Panc1 (cell line): ENCODE measurements at regions of chr7 and their contacts with region 1.

Region 1: DNA sequence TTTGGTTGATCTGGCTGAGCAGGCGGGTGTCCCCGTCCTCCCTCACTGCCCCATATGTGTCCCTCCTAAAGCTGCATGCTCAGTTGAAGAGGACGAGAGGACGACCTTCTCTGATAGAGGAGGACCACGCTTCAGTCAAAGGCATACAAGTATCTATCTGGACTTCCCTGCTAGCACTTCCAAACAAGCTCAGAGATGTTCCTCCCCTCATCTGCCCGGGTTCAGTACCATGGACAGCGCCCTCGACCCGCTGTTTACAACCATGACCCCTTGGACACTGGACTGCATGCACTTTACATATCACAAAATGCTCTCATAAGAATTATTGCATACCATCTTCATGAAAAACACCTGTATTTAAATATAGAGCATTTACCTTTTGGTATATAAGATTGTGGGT is 26.9 kb upstream of the TRIM56 start:
- DNase-seq: no peak
- ATAC-seq: no peak
- H3K4me3 ChIP-seq: no peak overlapping the region
- H3K27ac ChIP-seq: no peak overlapping the region
- H3K4me1 ChIP-seq: no peaks in the 10 kb centered on the region
- H3K27me3 ChIP-seq: peaks cover 17% of the 10 kb centered on the region
- CTCF ChIP-seq: no peak

Region 2: GRCh38 chr7:100896732-100897608 is 161.4 kb before region 1 on chr7:
- CTCF ChIA-PET with region 1: interaction called, 14 read pairs
- POLR2A ChIA-PET with region 1: no interaction called
- in situ Hi-C with region 1: no loop called
- intact Hi-C with region 1: loop called (anchors 2 kb)
- DNase-seq: no peak
- ATAC-seq: peak; percentile 56
- H3K4me3 ChIP-seq: peak overlapping the region; percentile 50 to 57
- H3K27ac ChIP-seq: no peak overlapping the region; the same call in 1 of the 2 replicates
- H3K4me1 ChIP-seq: peaks cover 16% of the 10 kb centered on the region
- H3K27me3 ChIP-seq: no peaks in the 10 kb centered on the region; the same call in 1 of the 2 replicates
- CTCF ChIP-seq: peak; percentile 94

Region 3: GRCh38 chr7:100965723-100966541 is 92.4 kb before region 1 on chr7:
- CTCF ChIA-PET with region 1: interaction called, 14 read pairs
- POLR2A ChIA-PET with region 1: no interaction called
- in situ Hi-C with region 1: no loop called
- intact Hi-C with region 1: loop called (anchors 2 kb)
- DNase-seq: no peak
- ATAC-seq: peak; percentile 92
- H3K4me3 ChIP-seq: peak overlapping the region; percentile 40 to 53
- H3K27ac ChIP-seq: no peak overlapping the region
- H3K4me1 ChIP-seq: peaks cover 13% of the 10 kb centered on the region
- H3K27me3 ChIP-seq: peaks cover 5% of the 10 kb centered on the region
- CTCF ChIP-seq: peak; percentile 99

Region 4: GRCh38 chr7:101085162-101085987 is 27.0 kb after region 1 on chr7 and contains the start of gene TRIM56:
- CTCF ChIA-PET with region 1: no interaction called
- POLR2A ChIA-PET with region 1: no interaction called
- in situ Hi-C with region 1: no loop called
- intact Hi-C with region 1: no loop called
- DNase-seq: no peak
- ATAC-seq: peak; percentile 94
- H3K4me3 ChIP-seq: peak within 1 kb of the TSS; percentile 65 to 87
- H3K27ac ChIP-seq: peak within 1 kb of the TSS; percentile 97
- H3K4me1 ChIP-seq: peaks cover 14% of the 10 kb centered on the region
- H3K27me3 ChIP-seq: no peaks in the 10 kb centered on the region
- CTCF ChIP-seq: no peak
- total RNA-seq, gene TRIM56: 37.4 TPM